Tibial artery (tissue), 4 donors: ENCODE measurements at regions of chr11 and their contacts with region 1.

Region 1: DNA sequence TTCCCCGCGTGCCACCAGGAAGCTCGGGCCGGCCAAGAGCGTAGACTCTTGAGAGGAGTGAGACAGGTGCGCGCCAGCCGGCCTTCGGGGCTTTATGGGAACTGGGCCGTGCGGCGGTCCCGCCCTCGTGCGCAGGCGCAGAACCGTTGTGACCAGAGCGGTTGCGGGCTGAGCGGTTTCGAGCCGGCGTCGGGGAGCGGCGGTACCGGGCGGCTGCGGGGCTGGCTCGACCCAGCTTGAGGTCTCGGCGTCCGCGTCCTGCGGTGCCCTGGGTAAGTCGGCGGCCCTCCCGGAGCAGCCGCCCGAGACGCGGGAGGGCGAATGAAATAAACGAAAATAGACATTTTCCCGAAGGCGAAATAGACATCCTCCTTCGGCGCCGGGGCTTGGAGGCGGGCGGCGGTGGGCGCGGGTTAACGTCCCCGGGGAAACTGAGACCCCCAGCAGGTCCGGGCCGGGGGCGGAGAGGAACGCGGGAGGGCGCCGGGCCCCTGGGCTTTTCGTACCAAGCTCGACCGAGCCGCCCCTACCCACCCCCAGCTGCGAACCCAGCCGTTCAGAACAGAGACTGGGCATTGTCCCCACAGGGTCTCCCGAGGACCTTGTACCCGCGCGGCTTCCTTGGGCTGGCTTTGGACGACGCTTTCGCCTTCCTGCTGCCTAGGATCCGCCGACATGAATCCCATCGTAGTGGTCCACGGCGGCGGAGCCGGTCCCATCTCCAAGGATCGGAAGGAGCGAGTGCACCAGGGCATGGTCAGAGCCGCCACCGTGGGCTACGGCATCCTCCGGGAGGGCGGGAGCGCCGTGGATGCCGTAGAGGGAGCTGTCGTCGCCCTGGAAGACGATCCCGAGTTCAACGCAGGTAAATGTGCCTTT is at the start of gene ASRGL1:
- DNase-seq: peak; percentile 74 to 85
- H3K4me3 ChIP-seq: peak within 1 kb of the TSS; percentile 60 to 87
- H3K27ac ChIP-seq: peak within 1 kb of the TSS in 1 of 2 donors; percentile 16
- H3K4me1 ChIP-seq: peaks cover 0 to 10% (median 5%) of the 10 kb centered on the region in 4 donors
- H3K27me3 ChIP-seq: peaks cover 0 to 10% of the 10 kb centered on the region in 2 donors
- CTCF ChIP-seq: no peak

Region 2: DNA sequence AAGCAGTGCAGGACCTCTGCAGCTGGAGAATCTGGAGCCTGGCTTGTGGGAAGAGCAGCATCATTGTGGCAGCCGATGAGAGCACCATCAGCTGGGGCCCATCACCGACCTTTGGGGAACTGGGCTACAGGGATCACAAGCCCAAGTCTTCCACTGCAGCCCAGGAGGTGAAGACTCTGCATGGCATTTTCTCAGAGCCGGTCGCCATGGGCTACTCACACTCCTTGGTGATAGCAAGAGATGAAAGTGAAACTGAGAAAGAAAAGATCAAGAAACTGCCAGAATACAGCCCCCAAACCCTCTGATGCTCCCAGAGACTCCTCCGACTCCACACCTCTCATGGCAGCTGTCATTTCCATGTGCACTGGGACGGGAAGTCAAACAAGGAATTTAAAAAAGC is 35.3 kb after region 1 on chr11:
- intact Hi-C with region 1: loop called (anchors 1 kb)
- DNase-seq: no peak
- H3K4me3 ChIP-seq: no peak overlapping the region
- H3K27ac ChIP-seq: no peak overlapping the region
- H3K4me1 ChIP-seq: no peaks in the 10 kb centered on the region
- H3K27me3 ChIP-seq: no peaks in the 10 kb centered on the region
- CTCF ChIP-seq: no peak